HCT116 (cell line): ENCODE measurements at regions of chr20 and their contacts with region 1.

Region 1: DNA sequence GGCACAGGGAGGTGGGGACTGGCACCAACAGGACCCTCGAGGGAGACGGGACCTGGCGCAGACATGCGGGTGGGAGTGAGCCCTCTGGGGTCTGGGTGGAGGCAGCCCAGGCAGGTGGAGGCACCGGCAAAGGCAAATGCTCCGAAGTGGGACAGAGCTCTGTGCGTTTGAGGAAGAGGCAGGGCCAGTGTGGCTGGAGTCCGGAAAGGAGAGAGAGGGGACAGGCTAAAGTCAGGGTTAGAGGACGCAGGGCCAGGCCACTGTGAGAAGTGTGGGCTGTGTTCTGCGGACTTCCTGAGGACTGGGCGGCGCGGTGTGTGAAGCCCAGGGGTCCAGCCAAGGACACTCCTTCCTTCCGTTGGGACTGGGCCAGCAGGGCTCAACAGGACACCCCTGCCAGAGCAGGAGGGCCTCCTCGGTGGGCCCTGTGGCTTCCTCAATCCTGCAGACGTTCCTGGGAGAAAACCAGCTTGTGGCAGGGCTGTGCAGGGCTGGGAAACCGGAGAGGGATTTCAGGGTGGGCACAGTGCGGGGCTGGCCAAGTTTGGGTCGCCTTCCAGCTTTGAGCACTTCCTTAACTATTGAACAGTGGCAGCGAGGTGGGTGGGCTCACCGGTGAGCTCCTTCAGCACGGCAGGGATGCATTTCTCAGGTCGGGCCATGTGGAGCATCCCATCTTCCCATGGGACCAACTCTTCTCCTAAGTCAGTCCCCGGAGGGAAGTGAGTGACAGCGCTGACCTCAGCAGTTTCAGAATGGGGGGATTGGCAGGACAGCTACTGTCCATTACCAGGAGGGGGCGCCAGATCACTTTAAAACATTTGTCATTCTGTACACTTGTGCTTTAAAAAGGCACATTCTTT is 22.5 kb downstream of the MOCS3 start:
- DNase-seq: peak; percentile 41
- ATAC-seq: peak; percentile 76
- H3K4me3 ChIP-seq: no peak overlapping the region
- H3K27ac ChIP-seq: no peak overlapping the region
- H3K4me1 ChIP-seq: peaks cover 0 to 14% of the 10 kb centered on the region in 2 experiments; a peak in 2 of 4 replicates
- H3K27me3 ChIP-seq: no peaks in the 10 kb centered on the region
- CTCF ChIP-seq: peak; percentile 48 to 96 (median 85); a peak in 5 of 6 replicates
- POLR2A ChIP-seq: no peak
- RAD21 ChIP-seq: peak; percentile 75

Region 2: GRCh38 chr20:50967586-50967985 is 13.5 kb before region 1 on chr20:
- CTCF ChIA-PET with region 1: interaction called, 12 read pairs
- POLR2A ChIA-PET with region 1: no interaction called
- RAD21 ChIA-PET with region 1: no interaction called
- intact Hi-C with region 1: no loop called
- DNase-seq: no peak
- ATAC-seq: no peak
- H3K4me3 ChIP-seq: no peak overlapping the region
- H3K27ac ChIP-seq: no peak overlapping the region
- H3K4me1 ChIP-seq: no peaks in the 10 kb centered on the region
- H3K27me3 ChIP-seq: no peaks in the 10 kb centered on the region
- CTCF ChIP-seq: no peak
- POLR2A ChIP-seq: no peak
- RAD21 ChIP-seq: no peak

Region 3: DNA sequence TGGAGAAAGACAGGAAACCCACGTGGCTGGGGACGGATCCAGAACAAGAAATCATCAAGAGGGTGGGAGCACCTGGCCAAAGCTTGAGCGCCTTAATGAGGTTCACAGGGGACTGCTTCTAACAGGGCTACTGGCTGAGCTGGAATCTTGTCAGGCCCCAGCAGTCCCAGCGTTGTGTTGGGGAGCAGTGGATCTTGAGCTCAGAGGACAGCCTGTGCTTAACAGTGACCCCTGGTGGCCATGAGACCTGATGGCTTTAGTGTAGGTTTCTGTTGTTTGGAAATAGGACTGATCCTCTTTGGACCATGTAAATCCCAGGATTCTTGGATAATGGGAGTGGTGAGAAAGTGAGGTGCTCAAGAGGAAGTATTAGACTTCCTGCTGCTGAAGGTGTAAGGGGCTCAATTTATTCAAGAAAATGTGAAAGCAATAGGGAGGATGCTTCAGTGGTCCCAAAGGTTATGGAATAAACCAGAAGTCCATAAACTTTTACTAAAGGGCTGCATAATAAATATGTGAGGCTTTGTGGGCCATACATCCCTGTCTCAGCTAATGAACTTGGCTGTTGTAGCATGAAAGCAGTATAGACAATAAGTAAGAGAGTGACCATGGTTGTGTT is 345.2 kb after region 1 on chr20:
- CTCF ChIA-PET with region 1: interaction called, 16 read pairs
- POLR2A ChIA-PET with region 1: no interaction called
- RAD21 ChIA-PET with region 1: no interaction called
- intact Hi-C with region 1: no loop called
- DNase-seq: peak; percentile 54
- ATAC-seq: peak; percentile 93
- H3K4me3 ChIP-seq: no peak overlapping the region
- H3K27ac ChIP-seq: no peak overlapping the region
- H3K4me1 ChIP-seq: no peaks in the 10 kb centered on the region
- H3K27me3 ChIP-seq: no peaks in the 10 kb centered on the region
- CTCF ChIP-seq: peak; percentile 51 to 86 (median 73); a peak in 5 of 6 replicates
- POLR2A ChIP-seq: no peak
- RAD21 ChIP-seq: peak; percentile 56